Mammary epithelial cell (primary cell): ENCODE measurements at regions of chr21 and their contacts with region 1.

Region 1: DNA sequence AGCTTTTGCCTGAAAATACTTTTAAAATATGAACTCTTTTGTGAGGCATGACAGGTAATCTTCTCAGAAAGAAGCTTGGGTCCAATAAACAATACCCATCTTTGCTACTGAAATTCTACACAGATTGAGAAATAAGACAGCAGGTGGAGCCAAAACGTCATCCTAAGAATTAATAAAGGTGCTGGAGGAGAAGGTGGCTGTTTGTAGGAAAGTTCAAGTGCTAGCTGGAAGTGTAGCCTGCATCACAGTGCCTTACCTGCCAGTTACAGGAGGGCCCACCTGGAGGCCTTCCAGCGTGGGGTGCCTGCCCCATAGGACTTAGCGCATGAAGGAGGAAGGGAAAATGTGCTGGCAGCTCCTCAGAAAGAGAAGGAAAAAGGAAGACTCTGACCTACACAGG is 93.7 kb downstream of the TTC3 start:
- DNase-seq: peak; percentile 21
- H3K4me3 ChIP-seq: no peak overlapping the region
- H3K27ac ChIP-seq: no peak overlapping the region
- H3K4me1 ChIP-seq: no peaks in the 10 kb centered on the region
- H3K27me3 ChIP-seq: no peaks in the 10 kb centered on the region
- CTCF ChIP-seq: peak; percentile 15 to 32

Region 2: GRCh38 chr21:37563641-37564340 is 397.1 kb after region 1 on chr21:
- CTCF ChIA-PET with region 1: no interaction called
- dilution Hi-C with region 1: no loop called
- in situ Hi-C with region 1: no loop called
- intact Hi-C with region 1: loop called (anchors 5 kb)
- DNase-seq: peak; percentile 91
- H3K4me3 ChIP-seq: peak overlapping the region; percentile 45 to 80 (median 51)
- H3K27ac ChIP-seq: peak overlapping the region; percentile 91
- H3K4me1 ChIP-seq: peaks cover 14% of the 10 kb centered on the region
- H3K27me3 ChIP-seq: no peaks in the 10 kb centered on the region
- CTCF ChIP-seq: peak; percentile 11 to 57

Region 3: DNA sequence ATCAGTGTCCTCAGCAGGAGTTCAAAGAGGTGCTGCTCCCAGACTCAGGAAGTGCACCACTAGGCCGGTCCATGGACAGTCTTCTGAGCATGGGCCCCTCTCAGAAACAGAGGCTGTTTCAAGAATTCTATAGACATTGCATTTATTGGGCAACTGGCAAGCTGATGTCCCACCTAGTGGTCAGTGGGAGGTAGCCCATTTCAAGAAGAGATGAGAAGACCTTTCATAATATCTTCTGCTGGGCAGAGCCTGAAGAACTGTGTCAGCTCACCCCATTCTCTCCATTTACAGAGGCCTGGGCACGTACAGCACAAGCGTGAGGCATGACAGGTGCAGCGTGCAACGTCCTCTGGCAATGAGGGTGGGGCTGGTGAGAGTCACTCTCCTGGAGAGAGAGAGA is 415.9 kb after region 1 on chr21:
- CTCF ChIA-PET with region 1: no interaction called
- dilution Hi-C with region 1: no loop called
- in situ Hi-C with region 1: no loop called
- intact Hi-C with region 1: loop called (anchors 1 kb)
- DNase-seq: peak; percentile 32
- H3K4me3 ChIP-seq: no peak overlapping the region
- H3K27ac ChIP-seq: no peak overlapping the region
- H3K4me1 ChIP-seq: no peaks in the 10 kb centered on the region
- H3K27me3 ChIP-seq: no peaks in the 10 kb centered on the region
- CTCF ChIP-seq: peak; percentile 54 to 61